Sciatic nerve (tissue), 2 donors: ENCODE measurements at regions of chr11 and their contacts with region 1.

Region 1: GRCh38 chr11:123344790-123345357 is 85.2 kb upstream of the GRAMD1B start:
- DNase-seq: no peak
- ATAC-seq: no peak

Region 2: GRCh38 chr11:123357961-123358841 is 13.3 kb after region 1 on chr11:
- intact Hi-C with region 1: loop called (anchors 1 kb)
- DNase-seq: no peak
- ATAC-seq: no peak